ENCODE measurements at regions of chr15 and their contacts with region 1.

Region 1: GRCh38 chr15:86362555-86362954 is 282.9 kb downstream of the AGBL1 start:
- DNase-seq: peak; percentile 86
- H3K4me3 Mint-ChIP-seq: no peak overlapping the region
- H3K27ac Mint-ChIP-seq: peak overlapping the region; percentile 49
- H3K4me1 Mint-ChIP-seq: peaks cover 20% of the 10 kb centered on the region
- H3K27me3 Mint-ChIP-seq: no peaks in the 10 kb centered on the region
- CTCF ChIP-seq: no peak

Region 2: DNA sequence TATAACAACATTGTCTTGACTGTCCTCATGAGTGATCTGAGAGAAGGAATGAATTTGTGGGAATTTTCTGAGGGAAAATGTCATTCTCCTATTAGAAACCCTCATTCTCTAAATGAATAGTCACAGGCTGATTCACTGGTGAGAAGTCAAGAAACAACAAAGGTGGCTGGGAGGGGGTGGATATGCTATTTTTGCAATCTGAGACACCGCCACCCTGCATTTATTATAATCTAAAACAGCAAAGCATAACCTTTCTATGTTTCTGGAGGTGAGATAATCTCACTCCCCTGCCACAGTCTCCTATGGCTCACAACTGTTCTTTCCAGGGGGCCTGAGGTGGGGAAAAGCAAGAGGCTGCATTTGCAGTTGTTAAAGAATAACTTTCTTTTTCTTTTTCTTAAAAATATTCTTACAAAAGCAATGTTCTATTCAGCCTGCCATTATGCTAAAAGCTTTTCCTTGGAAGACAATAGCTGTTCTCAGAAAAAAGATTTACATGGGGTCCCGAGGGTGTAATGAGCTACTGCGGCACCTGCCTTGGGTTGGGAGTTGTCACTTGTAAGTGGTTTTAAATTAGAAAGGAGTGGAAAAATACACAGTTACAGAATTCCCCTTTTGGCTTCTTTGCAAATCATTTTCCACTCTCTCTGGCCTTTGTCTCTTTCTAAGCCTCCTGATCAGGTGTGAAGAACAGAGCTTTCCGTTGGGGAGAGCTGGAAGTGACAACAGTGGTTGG is 62.0 kb before region 1 on chr15:
- CTCF ChIA-PET with region 1: no interaction called
- POLR2A ChIA-PET with region 1: no interaction called
- intact Hi-C with region 1: no loop called
- DNase-seq: no peak
- H3K4me3 Mint-ChIP-seq: no peak overlapping the region
- H3K27ac Mint-ChIP-seq: no peak overlapping the region
- H3K4me1 Mint-ChIP-seq: peaks cover 6% of the 10 kb centered on the region
- H3K27me3 Mint-ChIP-seq: no peaks in the 10 kb centered on the region
- CTCF ChIP-seq: no peak

Region 3: GRCh38 chr15:86375733-86376280 is 13.3 kb after region 1 on chr15:
- CTCF ChIA-PET with region 1: no interaction called
- POLR2A ChIA-PET with region 1: interaction called, 11 read pairs
- intact Hi-C with region 1: no loop called
- DNase-seq: peak; percentile 81
- H3K4me3 Mint-ChIP-seq: no peak overlapping the region
- H3K27ac Mint-ChIP-seq: peak overlapping the region; percentile 57
- H3K4me1 Mint-ChIP-seq: peaks cover 35% of the 10 kb centered on the region
- H3K27me3 Mint-ChIP-seq: no peaks in the 10 kb centered on the region
- CTCF ChIP-seq: no peak

Measured in MCF 10A (cell line).